ENCODE measurements at regions of chr17 and their contacts with region 1.

Region 1: DNA sequence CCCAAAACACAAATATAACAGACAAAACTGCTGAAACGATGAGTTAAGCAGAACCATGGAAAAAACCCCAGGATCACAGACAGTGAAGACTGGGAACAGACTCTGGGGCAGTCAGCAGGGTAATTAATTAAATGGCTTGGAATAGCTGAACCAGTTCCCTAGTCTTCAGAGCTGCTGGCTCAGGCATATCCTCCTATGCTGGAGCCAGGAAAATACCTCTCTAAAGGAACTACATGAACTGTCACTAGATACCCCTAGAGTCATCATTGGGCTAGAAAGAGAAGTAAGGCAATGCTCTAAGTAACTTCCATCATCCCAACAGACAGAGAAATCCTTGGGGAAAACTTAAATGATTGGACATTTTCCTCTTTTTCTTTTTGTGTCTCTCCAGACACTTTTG is 113.0 kb downstream of the STXBP4 start:
- DNase-seq: no peak
- ATAC-seq: no peak

Region 2: GRCh38 chr17:55110521-55110920 is 29.0 kb after region 1 on chr17:
- intact Hi-C with region 1: loop called (anchors 2 kb)
- DNase-seq: no peak
- ATAC-seq: no peak